ENCODE measurements at regions of chr2 and their contacts with region 1.

Region 1: DNA sequence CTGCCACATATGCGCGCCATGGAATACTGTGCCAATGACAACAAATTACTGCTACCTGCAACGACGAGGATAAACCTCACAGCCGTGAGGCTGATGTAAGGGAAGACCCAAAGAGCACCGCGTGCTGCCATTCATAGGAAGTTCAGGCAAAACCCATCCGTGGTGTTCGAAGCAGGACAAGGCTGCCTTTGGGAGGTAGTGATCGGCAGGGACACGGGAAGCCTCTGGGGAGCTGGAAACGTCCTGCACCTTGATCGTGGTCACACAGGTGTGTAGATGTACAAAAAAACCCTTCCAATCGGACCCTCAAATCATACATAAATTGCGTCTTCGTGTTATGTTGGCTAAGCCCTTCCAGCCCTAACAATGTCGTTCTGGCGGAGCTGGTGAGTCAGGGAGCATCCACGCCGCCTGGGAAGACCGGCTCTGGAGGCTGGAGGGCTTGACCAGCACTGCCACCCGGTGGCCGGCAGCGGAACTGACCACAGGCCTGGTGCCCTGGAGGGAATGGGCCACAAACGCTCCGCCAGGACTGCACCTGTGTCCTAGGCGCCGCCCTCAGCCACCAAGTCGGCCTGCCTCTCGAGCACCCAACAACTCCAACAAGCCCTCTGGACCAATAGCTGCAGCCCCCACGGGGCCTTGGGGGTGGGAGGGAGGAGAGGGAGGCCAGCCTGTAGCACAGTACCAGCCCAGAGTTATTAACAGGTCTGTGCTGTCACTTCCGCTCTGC is 4.1 kb upstream of the NEURL3 start:
- DNase-seq: peak; percentile 77
- ATAC-seq: peak; percentile 88
- H3K4me3 ChIP-seq: no peak overlapping the region
- H3K27ac ChIP-seq: no peak overlapping the region
- H3K4me1 ChIP-seq: peaks cover 17 to 46% of the 10 kb centered on the region in 2 experiments
- H3K27me3 ChIP-seq: no peaks in the 10 kb centered on the region; the same call in 1 of the 2 replicates
- CTCF ChIP-seq: peak; percentile 93 to 98 (median 97)
- POLR2A ChIP-seq: no peak
- RAD21 ChIP-seq: peak; percentile 98

Region 2: DNA sequence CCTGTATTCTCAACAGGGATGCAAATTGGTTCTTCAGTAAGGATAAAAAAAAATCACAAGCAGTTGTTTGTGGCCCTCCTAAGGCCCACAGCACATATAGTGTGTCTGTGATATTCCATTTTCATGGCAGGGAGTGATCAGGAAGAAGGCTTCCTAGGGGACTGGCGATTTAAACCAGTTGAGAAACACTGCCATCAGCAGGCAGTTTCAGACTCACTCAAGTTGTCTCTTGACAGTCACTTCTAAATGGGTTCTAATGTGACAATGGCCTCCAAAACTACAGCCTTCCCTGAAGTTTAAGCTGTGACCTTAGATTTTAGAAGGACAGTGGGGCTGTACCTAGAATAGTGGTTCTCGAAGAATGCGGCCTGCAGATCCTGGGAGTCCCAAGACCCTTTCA is 237.3 kb before region 1 on chr2:
- CTCF ChIA-PET with region 1: no interaction called
- POLR2A ChIA-PET with region 1: no interaction called
- RAD21 ChIA-PET with region 1: interaction called in 1 of 2 experiments, 3 read pairs
- intact Hi-C with region 1: loop called (anchors 5 kb)
- DNase-seq: no peak
- ATAC-seq: no peak
- H3K4me3 ChIP-seq: no peak overlapping the region
- H3K27ac ChIP-seq: no peak overlapping the region
- H3K4me1 ChIP-seq: peaks cover 0 to 13% of the 10 kb centered on the region in 2 experiments; a peak in 2 of 4 replicates
- H3K27me3 ChIP-seq: no peaks in the 10 kb centered on the region
- CTCF ChIP-seq: 0 out of 6 replicates have a peak, but pooled peaks of 1 of the 3 experiments have one; percentile 7
- POLR2A ChIP-seq: no peak
- RAD21 ChIP-seq: peak; percentile 31

Region 3: DNA sequence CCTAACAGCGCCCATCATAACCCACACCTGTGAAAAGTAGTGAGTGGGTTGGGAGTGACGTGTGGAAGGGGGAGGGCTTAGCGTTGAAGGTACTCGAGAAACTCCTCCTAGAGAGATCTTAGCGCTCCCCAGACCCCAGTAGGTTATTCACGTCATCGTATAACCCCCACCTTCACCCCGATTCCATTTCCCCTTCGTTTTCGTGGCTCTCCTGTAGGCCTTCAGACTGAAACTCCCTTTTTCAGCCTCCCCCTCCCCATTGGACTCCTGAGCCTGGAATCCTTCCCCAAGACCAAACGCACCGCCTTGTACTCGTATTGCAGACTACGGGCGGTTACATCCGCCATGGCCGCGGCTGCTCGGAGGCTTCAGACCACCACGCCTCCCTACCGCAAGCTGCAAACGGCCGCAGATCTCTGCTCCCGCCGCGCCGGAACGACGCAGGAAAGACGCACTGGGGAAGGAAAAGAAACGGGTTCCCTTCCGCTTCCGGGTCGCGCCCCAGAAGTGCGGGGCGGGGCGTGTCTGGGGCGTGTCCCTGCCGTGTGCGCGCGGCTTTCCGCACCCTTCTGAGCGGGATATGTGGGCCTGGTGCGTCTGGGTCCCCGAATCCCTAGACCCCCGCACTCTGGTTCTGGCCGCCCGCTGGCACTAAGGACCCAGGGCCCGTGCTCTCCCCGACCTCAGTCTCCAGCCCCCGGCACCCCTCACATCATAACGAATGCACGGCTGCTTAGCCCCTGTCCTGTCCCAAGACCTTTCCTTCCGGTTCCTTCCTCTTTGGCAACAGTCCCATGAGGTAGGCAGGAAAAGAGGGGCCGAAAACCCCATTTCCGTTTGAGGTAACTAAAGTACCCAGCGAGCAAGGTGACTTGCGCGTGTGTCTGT is 203.9 kb before region 1 on chr2 and contains the start of gene SNRNP200:
- CTCF ChIA-PET with region 1: interaction called, 4 read pairs
- POLR2A ChIA-PET with region 1: no interaction called
- RAD21 ChIA-PET with region 1: no interaction called
- intact Hi-C with region 1: loop called (anchors 1 kb)
- DNase-seq: peak; percentile 69
- ATAC-seq: peak; percentile 96
- H3K4me3 ChIP-seq: peak within 1 kb of the TSS; percentile 77 to 97
- H3K27ac ChIP-seq: peak within 1 kb of the TSS; percentile 75
- H3K4me1 ChIP-seq: peaks cover 10 to 19% of the 10 kb centered on the region in 2 experiments
- H3K27me3 ChIP-seq: no peaks in the 10 kb centered on the region
- CTCF ChIP-seq: no peak
- POLR2A ChIP-seq: peak; percentile 83
- RAD21 ChIP-seq: 0 out of 2 replicates have a peak, but pooled peaks have one; percentile 11
- total RNA-seq, gene SNRNP200: 202 TPM

Region 4: GRCh38 chr2:96336104-96336775 is 173.0 kb before region 1 on chr2:
- CTCF ChIA-PET with region 1: interaction called, 5 read pairs
- POLR2A ChIA-PET with region 1: no interaction called
- RAD21 ChIA-PET with region 1: no interaction called
- intact Hi-C with region 1: loop called (anchors 5 kb)
- DNase-seq: no peak
- ATAC-seq: no peak
- H3K4me3 ChIP-seq: peak overlapping the region; percentile 90 to 96
- H3K27ac ChIP-seq: peak overlapping the region; percentile 69
- H3K4me1 ChIP-seq: peaks cover 4 to 45% of the 10 kb centered on the region in 2 experiments; a peak in 3 of 4 replicates
- H3K27me3 ChIP-seq: no peaks in the 10 kb centered on the region
- CTCF ChIP-seq: no peak
- POLR2A ChIP-seq: peak; percentile 67
- RAD21 ChIP-seq: no peak

Region 5: DNA sequence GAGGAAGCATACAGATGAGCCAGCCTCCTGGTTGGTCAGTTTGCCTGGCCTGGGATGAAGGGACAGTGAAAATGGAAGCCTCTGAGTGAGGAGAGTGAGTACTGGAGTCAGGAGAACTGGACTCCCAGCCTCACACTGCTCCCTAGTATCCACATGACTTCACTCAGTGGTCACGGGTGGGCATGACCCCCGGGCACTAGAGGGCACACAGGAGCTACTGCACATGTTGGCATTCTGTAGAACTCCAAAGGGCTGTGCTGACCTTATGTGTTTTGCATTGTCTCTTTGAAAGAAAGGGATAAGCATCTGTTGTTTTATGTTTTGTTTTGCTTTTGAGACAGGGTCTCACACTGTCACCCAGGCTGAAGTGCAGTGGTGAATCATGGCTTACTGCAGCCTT is 150.0 kb before region 1 on chr2:
- CTCF ChIA-PET with region 1: interaction called, 5 read pairs
- POLR2A ChIA-PET with region 1: no interaction called
- RAD21 ChIA-PET with region 1: interaction called in 1 of 2 experiments, 5 read pairs
- intact Hi-C with region 1: loop called (anchors 2 kb)
- DNase-seq: no peak
- ATAC-seq: no peak; the same call in 1 of the 2 replicates
- H3K4me3 ChIP-seq: no peak overlapping the region
- H3K27ac ChIP-seq: no peak overlapping the region
- H3K4me1 ChIP-seq: no peaks in the 10 kb centered on the region
- H3K27me3 ChIP-seq: no peaks in the 10 kb centered on the region
- CTCF ChIP-seq: peak in 2 of 3 experiments; percentile 19 to 22; a peak in 1 of 6 replicates
- POLR2A ChIP-seq: no peak
- RAD21 ChIP-seq: peak; percentile 42

Region 6: DNA sequence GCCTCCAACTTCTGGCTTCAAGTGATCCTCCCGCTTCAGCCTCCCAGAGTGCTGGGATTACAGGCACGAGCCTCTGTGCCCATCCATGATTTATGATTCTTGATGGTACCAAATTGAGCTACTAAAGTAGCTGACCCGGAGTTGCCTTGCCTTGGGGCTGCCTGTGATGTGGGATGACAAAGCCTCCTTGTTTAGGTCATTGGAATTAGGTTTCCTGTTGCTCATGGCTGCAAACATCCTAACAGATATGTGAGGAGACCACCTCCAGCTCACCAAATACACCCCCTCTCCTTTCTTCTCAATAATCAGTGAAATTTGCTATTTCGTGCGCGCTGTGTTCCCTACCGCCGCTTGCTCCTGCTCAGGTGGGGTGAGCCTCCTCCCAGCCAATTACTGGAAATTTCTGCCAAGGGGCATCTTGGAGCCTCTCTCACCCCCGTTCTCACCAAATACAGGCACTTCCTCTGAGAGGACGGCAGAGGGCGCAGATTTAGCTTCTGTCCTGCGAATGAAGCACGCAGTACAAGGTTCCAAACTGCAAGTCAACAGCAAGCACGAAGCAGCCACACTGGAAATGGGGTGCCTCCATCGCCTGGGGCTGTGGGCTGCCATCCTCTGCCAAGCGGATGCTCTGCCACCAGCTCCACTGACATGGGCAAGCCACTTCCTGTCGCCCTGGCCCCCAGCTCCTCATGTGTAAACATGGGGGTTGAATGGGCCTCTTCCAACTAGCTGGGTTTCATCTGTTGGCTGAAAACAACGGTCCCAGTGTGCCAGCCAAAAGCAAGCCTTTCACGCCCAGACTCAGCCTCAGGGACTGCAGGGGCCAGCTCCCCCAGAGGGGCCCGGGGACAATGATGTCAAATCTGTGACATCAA is 102.0 kb before region 1 on chr2:
- CTCF ChIA-PET with region 1: interaction called, 140 read pairs
- POLR2A ChIA-PET with region 1: interaction called, 6 read pairs
- RAD21 ChIA-PET with region 1: interaction called, 20 to 28 read pairs
- intact Hi-C with region 1: loop called (anchors 1 kb)
- DNase-seq: peak; percentile 72
- ATAC-seq: peak; percentile 91
- H3K4me3 ChIP-seq: no peak overlapping the region
- H3K27ac ChIP-seq: no peak overlapping the region
- H3K4me1 ChIP-seq: peaks cover 0 to 27% of the 10 kb centered on the region in 2 experiments; a peak in 2 of 4 replicates
- H3K27me3 ChIP-seq: no peaks in the 10 kb centered on the region
- CTCF ChIP-seq: peak; percentile 82 to 94 (median 86)
- POLR2A ChIP-seq: no peak
- RAD21 ChIP-seq: peak; percentile 88

Region 7: DNA sequence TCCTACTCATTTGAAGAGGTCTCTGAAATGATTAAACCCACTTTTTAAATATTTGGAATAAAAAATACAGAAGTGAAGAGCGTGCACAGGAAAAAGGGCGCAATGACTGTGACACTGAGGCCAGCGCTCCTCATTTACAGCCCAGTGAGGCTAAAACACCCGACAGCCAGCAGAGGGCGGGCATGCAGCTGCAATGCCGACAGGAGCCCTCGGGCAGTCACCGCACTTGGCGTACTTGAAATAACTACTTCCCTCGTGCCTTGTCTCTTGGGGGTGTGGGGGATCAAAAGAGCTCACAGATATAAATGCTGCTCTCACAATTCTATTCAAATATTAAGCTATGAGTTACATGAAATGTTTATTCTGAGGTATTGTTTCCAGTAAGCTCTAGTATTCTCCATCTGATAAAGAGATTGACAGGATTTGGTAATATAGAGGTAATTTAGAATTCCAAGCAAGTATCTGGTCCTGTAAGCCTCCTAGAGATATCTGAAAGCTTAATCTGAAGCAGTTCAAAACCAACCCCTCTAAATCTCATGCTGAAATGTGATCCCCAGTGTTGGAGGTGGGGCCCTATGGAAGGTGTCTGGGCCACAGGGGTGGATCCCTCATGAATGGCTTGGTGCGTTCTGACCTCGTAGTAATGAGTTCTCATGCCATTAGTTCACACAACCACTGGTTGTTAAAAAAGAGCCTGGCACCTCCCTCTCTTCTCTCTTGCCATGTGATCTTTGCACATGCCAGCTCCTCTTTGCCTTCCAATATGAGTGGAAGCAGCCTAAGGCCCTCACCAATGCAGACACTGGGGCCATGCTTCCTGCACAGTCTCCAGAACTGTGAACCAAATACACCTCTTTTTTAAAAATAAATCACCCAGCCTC is 1297.7 kb after region 1 on chr2:
- CTCF ChIA-PET with region 1: no interaction called
- POLR2A ChIA-PET with region 1: no interaction called
- RAD21 ChIA-PET with region 1: no interaction called
- intact Hi-C with region 1: no loop called
- DNase-seq: peak; percentile 45
- ATAC-seq: peak; percentile 98
- H3K4me3 ChIP-seq: no peak overlapping the region
- H3K27ac ChIP-seq: no peak overlapping the region
- H3K4me1 ChIP-seq: peaks cover 0 to 9% of the 10 kb centered on the region in 2 experiments; a peak in 1 of 4 replicates
- H3K27me3 ChIP-seq: no peaks in the 10 kb centered on the region
- CTCF ChIP-seq: peak; percentile 75 to 91 (median 88)
- POLR2A ChIP-seq: no peak
- RAD21 ChIP-seq: peak; percentile 96